Activated T-helper 1 cell treated with anti-CD3 and anti-CD28 coated beads, Interleukin-12 subunit alpha, Interleukin-12 subunit beta, Interleukin-2, Interleukin-4 antibody, amounts not matched to agents 30 ng/mL and 10 ng/mL and 1 ng/mL, durations not matched to agents 14 hours and 24 hours and 36 hours (primary cell): ENCODE measurements at regions of chr22 and their contacts with region 1.

Region 1: DNA sequence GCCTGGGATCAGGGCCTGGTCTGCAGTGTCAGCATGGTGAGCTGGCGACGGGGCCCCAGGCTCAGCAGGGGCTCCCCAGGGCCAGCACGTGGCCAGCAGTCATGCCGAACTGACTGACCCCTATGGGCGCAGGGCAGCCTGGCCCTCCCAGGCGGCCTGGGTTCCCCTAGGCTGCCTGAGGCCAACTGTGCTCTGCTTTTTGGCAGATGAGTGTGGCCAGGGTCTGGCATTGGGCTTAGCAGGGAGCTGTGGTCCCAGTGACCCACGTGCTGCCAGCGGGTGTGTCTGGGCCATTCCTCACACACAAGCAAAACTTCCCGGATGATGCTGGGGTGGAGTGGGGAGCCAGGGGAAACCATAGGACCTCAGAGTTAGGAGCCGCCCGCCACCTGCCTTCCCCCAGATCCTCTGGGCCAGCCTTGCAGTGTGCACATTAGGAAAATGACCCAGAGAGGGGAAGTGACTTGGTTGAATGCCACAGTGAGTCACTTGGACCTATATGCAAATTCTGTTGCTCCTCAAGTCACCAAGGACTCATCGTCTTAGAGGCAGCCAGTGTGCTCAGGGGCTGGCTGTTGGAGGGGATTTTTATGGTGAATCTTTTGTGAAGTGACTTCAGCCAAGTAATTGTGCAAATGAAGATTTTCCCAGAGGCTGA is 6.5 kb downstream of the ADORA2A start:
- DNase-seq: no peak
- H3K4me3 Mint-ChIP-seq: peak overlapping the region; percentile 76
- H3K27ac Mint-ChIP-seq: peak overlapping the region; percentile 100
- H3K4me1 Mint-ChIP-seq: peaks cover 81% of the 10 kb centered on the region
- H3K27me3 Mint-ChIP-seq: peaks cover 3% of the 10 kb centered on the region

Region 2: GRCh38 chr22:24289114-24289513 is 144.8 kb before region 1 on chr22:
- intact Hi-C with region 1: loop called (anchors 1 kb)
- DNase-seq: no peak
- H3K4me3 Mint-ChIP-seq: no peak overlapping the region
- H3K27ac Mint-ChIP-seq: no peak overlapping the region
- H3K4me1 Mint-ChIP-seq: peaks cover 24% of the 10 kb centered on the region
- H3K27me3 Mint-ChIP-seq: peaks cover 4% of the 10 kb centered on the region

Region 3: GRCh38 chr22:24400726-24401596 is 33.0 kb before region 1 on chr22:
- intact Hi-C with region 1: loop called (anchors 1 kb)
- DNase-seq: no peak
- H3K4me3 Mint-ChIP-seq: peak overlapping the region; percentile 37
- H3K27ac Mint-ChIP-seq: peak overlapping the region; percentile 77
- H3K4me1 Mint-ChIP-seq: peaks cover 52% of the 10 kb centered on the region
- H3K27me3 Mint-ChIP-seq: no peaks in the 10 kb centered on the region

Region 4: DNA sequence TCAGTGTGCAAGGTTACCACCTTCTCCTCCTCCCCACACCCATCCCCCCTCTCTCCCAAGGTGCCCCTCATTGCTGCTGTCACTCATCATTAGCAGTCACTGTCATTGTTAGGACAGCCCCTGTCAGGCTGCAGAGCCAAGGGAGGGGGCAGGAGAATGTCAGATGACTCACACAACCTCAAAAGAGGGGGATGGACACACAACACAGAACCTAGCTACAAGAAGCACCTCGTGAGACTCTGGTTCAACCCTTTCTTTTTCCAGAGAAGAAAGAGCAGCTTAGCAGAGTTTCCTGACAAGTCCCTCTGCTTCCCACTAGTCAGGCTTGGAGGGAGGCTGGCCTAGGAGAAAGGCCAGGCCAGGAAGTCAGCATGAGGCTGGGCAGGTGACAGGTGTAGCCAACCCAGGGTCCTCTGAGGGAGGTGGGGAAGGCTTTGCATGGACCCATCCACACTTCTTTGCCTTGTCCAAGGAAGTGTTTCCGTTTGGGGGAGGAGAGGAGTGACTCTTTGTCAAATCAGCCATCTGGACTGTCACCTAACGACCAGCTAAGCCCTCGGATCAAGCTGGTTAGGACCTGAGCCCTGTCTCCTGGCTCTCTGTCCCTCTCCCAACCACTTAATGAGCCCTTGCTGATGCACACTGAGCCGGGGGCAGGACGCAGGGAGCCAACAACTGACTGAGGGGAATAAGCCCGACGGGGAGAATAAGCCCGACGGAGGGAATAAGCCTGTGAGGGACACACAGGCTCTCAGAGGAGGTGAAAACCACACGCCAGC is 11.7 kb after region 1 on chr22:
- intact Hi-C with region 1: loop called (anchors 1 kb)
- DNase-seq: no peak
- H3K4me3 Mint-ChIP-seq: no peak overlapping the region
- H3K27ac Mint-ChIP-seq: peak overlapping the region; percentile 43
- H3K4me1 Mint-ChIP-seq: peaks cover 25% of the 10 kb centered on the region
- H3K27me3 Mint-ChIP-seq: no peaks in the 10 kb centered on the region

Region 5: GRCh38 chr22:24455751-24456426 is 21.9 kb after region 1 on chr22:
- intact Hi-C with region 1: no loop called
- DNase-seq: no peak
- H3K4me3 Mint-ChIP-seq: no peak overlapping the region
- H3K27ac Mint-ChIP-seq: no peak overlapping the region
- H3K4me1 Mint-ChIP-seq: peaks cover 18% of the 10 kb centered on the region
- H3K27me3 Mint-ChIP-seq: no peaks in the 10 kb centered on the region

Region 6: GRCh38 chr22:24486501-24486921 is 52.6 kb after region 1 on chr22:
- intact Hi-C with region 1: loop called (anchors 1 kb)
- DNase-seq: peak; percentile 17
- H3K4me3 Mint-ChIP-seq: no peak overlapping the region
- H3K27ac Mint-ChIP-seq: peak overlapping the region; percentile 63
- H3K4me1 Mint-ChIP-seq: peaks cover 21% of the 10 kb centered on the region
- H3K27me3 Mint-ChIP-seq: peaks cover 9% of the 10 kb centered on the region

Region 7: DNA sequence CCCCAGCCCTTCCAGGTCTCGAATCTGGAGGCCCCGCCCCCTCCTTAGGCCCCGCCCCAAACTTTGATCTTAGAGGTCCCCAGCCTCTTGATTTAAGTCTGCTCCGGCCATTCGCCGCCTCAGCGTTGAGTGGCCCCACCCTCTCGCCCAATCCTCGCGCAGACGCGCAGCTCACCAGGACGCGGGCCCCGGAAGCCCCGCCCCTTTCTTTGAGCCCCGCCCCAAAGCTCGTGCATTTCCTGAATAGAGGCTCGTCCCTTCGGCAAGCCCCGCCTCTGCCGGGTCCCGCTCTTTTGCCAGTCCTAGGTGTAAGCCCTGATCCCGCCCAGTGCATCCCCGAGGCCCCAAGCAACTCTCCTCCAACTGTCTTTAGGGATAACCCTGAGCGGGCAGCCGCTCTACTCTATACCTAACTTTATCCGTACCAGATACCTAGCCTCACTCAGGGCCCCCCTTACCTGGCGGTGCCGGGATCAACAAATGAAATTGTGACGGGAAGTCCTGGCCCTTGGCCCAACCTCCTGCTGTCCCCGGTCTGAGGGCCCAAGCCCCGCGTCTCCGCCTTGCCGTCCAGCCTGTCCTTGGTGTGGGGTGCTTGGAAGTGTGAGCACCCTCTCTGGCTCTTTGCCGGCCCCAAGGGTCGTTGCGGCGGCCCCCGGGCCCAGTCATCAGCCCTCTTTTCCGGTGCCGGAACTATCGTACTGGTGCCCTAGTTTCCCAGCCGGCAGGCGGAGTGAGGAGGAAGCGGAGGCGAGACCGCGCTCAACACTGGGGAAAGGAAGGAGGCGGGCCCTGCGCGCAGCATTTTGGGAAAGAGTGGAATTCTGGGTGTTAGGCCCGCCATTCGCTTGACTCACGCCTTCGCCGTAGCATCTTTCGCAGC is 121.5 kb after region 1 on chr22 and contains the start of gene SNRPD3:
- intact Hi-C with region 1: loop called (anchors 1 kb)
- DNase-seq: peak; percentile 97
- H3K4me3 Mint-ChIP-seq: peak within 1 kb of the TSS; percentile 98
- H3K27ac Mint-ChIP-seq: peak within 1 kb of the TSS; percentile 97
- H3K4me1 Mint-ChIP-seq: peaks cover 64% of the 10 kb centered on the region
- H3K27me3 Mint-ChIP-seq: no peaks in the 10 kb centered on the region
- total RNA-seq, gene SNRPD3: 155 and 158 TPM in 2 replicates